ENCODE measurements at regions of chr16 and their contacts with region 1.

Region 1: GRCh38 chr16:11297492-11298142 is 16.5 kb upstream of the PRM1 start:
- DNase-seq: peak; percentile 95
- ATAC-seq: peak; percentile 97
- H3K4me3 ChIP-seq: peak overlapping the region in 4 of 5 experiments; percentile 0 to 41 (median 25)
- H3K4me3 Mint-ChIP-seq: peak overlapping the region; percentile 67
- H3K27ac ChIP-seq: peak overlapping the region; percentile 67 to 73
- H3K27ac Mint-ChIP-seq: peak overlapping the region; percentile 93
- H3K4me1 ChIP-seq: peaks cover 61 to 66% of the 10 kb centered on the region in 2 donors
- H3K4me1 Mint-ChIP-seq: peaks cover 71% of the 10 kb centered on the region
- H3K27me3 ChIP-seq: peaks cover 0 to 4% (median 0%) of the 10 kb centered on the region in 4 experiments
- H3K27me3 Mint-ChIP-seq: no peaks in the 10 kb centered on the region
- CTCF ChIP-seq: peak; percentile 35

Region 2: GRCh38 chr16:10957771-10958486 is 339.7 kb before region 1 on chr16:
- CTCF ChIA-PET with region 1: interaction called, 17 read pairs
- POLR2A ChIA-PET with region 1: no interaction called
- intact Hi-C with region 1: no loop called
- DNase-seq: peak; percentile 31
- ATAC-seq: peak; percentile 63
- H3K4me3 ChIP-seq: no peak overlapping the region
- H3K4me3 Mint-ChIP-seq: peak overlapping the region; percentile 53
- H3K27ac ChIP-seq: peak overlapping the region in 1 of 2 donors; percentile 22
- H3K27ac Mint-ChIP-seq: peak overlapping the region; percentile 62
- H3K4me1 ChIP-seq: peaks cover 21 to 30% of the 10 kb centered on the region in 2 donors
- H3K4me1 Mint-ChIP-seq: peaks cover 49% of the 10 kb centered on the region
- H3K27me3 ChIP-seq: no peaks in the 10 kb centered on the region
- H3K27me3 Mint-ChIP-seq: no peaks in the 10 kb centered on the region
- CTCF ChIP-seq: no peak

Region 3: DNA sequence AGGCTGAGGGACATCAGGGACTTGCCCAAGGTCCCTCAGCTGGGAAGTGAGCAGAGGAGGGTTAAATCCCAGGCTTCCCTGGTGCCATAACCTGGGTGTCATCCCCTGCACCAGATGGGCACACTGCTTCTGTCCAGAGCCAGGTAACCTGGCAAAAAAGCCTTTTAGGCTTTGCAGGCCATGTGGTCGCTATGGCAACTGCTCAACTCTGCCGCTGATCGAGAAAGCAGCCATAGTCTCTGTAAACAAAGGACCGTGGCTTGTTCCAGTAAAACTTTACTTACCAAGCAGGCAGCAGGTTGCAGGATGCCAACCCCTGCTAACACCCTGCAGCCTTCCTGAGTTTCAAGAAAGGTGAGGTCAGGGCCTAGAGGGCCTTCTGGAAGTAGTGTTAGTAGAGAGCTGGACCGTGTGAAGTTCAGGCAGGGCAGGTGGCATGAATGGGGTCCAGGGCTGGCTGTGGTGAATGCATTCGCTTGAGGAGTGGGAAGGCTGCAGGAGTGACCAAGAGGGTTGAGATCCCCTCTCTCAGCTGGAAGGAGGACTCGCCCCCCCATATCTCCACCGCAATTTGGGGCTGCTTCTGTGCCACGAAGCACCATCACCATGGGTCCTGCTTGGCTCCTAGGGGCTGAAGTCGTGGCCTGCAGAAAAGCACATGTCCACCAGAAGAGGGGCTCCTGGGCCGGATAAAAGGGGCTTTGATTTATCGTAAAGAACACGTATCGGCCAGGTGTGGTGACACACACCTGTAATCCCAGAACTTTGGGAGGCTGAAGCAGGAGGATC is 132.9 kb before region 1 on chr16:
- CTCF ChIA-PET with region 1: no interaction called
- POLR2A ChIA-PET with region 1: no interaction called
- intact Hi-C with region 1: no loop called
- DNase-seq: no peak
- ATAC-seq: no peak
- H3K4me3 ChIP-seq: no peak overlapping the region
- H3K4me3 Mint-ChIP-seq: no peak overlapping the region
- H3K27ac ChIP-seq: no peak overlapping the region
- H3K27ac Mint-ChIP-seq: no peak overlapping the region
- H3K4me1 ChIP-seq: no peaks in the 10 kb centered on the region
- H3K4me1 Mint-ChIP-seq: no peaks in the 10 kb centered on the region
- H3K27me3 ChIP-seq: no peaks in the 10 kb centered on the region
- H3K27me3 Mint-ChIP-seq: no peaks in the 10 kb centered on the region
- CTCF ChIP-seq: no peak

Region 4: GRCh38 chr16:11201498-11202259 is 95.9 kb before region 1 on chr16:
- CTCF ChIA-PET with region 1: no interaction called
- POLR2A ChIA-PET with region 1: no interaction called
- intact Hi-C with region 1: no loop called
- DNase-seq: no peak
- ATAC-seq: no peak
- H3K4me3 ChIP-seq: no peak overlapping the region
- H3K4me3 Mint-ChIP-seq: no peak overlapping the region
- H3K27ac ChIP-seq: no peak overlapping the region
- H3K27ac Mint-ChIP-seq: no peak overlapping the region
- H3K4me1 ChIP-seq: peaks cover 3 to 18% of the 10 kb centered on the region in 2 donors
- H3K4me1 Mint-ChIP-seq: peaks cover 37% of the 10 kb centered on the region
- H3K27me3 ChIP-seq: peaks cover 0 to 15% (median 6%) of the 10 kb centered on the region in 4 experiments
- H3K27me3 Mint-ChIP-seq: peaks cover 22% of the 10 kb centered on the region
- CTCF ChIP-seq: no peak

Region 5: GRCh38 chr16:11312718-11313492 is 15.3 kb after region 1 on chr16:
- CTCF ChIA-PET with region 1: interaction called, 136 read pairs
- POLR2A ChIA-PET with region 1: interaction called, 118 read pairs
- intact Hi-C with region 1: loop called (anchors 1 kb)
- DNase-seq: peak; percentile 37
- ATAC-seq: no peak
- H3K4me3 ChIP-seq: no peak overlapping the region
- H3K4me3 Mint-ChIP-seq: peak overlapping the region; percentile 48
- H3K27ac ChIP-seq: no peak overlapping the region
- H3K27ac Mint-ChIP-seq: peak overlapping the region; percentile 82
- H3K4me1 ChIP-seq: peaks cover 59 to 73% of the 10 kb centered on the region in 2 donors
- H3K4me1 Mint-ChIP-seq: peaks cover 71% of the 10 kb centered on the region
- H3K27me3 ChIP-seq: no peaks in the 10 kb centered on the region
- H3K27me3 Mint-ChIP-seq: no peaks in the 10 kb centered on the region
- CTCF ChIP-seq: no peak

Region 6: DNA sequence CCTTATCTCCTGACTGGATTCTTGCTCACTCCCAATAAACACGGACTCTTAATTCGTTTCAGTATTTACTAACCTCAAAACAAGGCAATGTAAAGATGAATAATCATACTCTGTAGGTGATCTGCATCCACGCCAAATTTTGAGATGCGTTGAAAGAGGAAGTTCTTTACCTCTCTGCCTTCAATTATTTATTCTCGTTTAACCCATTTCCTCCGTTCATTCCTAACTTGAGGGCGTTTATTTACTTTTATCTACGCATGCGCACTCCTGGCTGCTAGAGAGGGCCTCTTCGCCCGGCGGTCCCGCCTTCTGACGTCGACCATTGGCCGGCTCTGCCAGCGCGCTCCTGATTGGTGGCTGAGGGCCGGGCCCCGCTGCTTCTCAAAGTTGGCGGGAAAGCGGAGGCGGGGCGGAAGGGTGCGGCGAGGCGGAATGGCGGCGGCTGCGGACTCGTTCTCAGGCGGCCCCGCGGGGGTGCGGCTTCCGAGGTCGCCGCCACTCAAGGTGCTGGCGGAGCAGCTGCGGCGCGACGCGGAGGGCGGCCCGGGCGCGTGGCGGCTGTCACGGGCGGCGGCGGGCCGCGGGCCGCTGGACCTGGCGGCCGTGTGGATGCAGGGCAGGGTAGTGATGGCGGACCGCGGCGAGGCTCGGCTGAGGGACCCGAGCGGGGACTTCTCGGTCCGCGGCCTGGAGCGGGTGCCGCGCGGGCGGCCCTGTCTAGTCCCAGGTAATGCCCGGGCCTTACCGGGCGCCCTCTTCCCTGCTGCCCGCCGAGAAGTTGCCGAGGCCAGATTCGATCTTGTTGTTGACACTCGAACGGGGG is 47.6 kb after region 1 on chr16 and contains the start of gene RMI2:
- CTCF ChIA-PET with region 1: interaction called, 120 read pairs
- POLR2A ChIA-PET with region 1: interaction called, 11 read pairs
- intact Hi-C with region 1: loop called (anchors 1 kb)
- DNase-seq: peak; percentile 97
- ATAC-seq: peak; percentile 100
- H3K4me3 ChIP-seq: peak within 1 kb of the TSS; percentile 61 to 76 (median 70)
- H3K4me3 Mint-ChIP-seq: peak within 1 kb of the TSS; percentile 90
- H3K27ac ChIP-seq: peak within 1 kb of the TSS in 1 of 2 donors; percentile 26
- H3K27ac Mint-ChIP-seq: peak within 1 kb of the TSS; percentile 78
- H3K4me1 ChIP-seq: peaks cover 8 to 25% of the 10 kb centered on the region in 2 donors
- H3K4me1 Mint-ChIP-seq: peaks cover 39% of the 10 kb centered on the region
- H3K27me3 ChIP-seq: no peaks in the 10 kb centered on the region
- H3K27me3 Mint-ChIP-seq: no peaks in the 10 kb centered on the region
- CTCF ChIP-seq: no peak
- total RNA-seq, gene RMI2: 25.5 and 27.0 TPM in 2 replicates

Region 7: DNA sequence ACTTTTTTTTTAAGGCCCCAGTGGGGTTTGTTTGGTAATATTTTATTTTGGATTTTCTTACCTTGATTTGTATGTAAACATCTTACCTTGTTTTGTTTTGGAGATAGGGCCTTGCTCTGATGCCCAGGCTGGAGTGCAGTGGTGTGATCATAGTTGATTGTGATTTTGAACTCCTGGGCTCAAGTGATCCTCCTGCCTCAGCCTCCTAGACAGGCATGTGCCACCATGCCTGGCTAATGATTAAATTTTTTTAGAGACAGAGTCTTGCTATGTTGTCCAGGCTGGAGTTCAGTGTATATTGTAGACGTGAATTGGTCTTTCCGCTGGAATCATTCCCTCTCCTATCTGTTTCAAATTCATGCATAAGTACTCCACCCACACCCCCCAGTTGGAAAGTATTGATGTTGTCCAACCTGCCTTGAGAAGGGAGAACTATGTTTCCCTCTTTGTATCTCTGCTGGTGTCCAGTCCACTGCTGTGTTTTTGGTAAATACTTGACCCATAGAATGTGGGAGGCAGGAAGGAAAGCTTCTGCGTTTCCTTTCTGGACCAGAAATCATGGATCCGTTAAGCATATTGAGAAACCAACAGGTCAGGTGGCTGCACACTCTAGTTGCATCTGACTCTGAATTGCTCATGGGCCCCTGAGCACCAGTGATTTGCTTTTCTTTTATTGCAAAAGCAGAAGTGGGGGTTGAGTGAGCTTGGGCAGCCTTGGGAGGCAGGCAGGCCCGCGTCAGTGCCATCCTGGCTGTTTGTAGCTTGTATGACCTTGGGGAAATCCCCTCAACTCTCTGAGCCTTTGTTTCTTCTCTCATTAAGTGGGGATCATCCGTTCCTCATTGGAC is 72.7 kb after region 1 on chr16:
- CTCF ChIA-PET with region 1: interaction called, 16 read pairs
- POLR2A ChIA-PET with region 1: no interaction called
- intact Hi-C with region 1: loop called (anchors 1 kb)
- DNase-seq: peak; percentile 93
- ATAC-seq: peak; percentile 98
- H3K4me3 ChIP-seq: no peak overlapping the region
- H3K4me3 Mint-ChIP-seq: peak overlapping the region; percentile 62
- H3K27ac ChIP-seq: peak overlapping the region; percentile 44 to 56
- H3K27ac Mint-ChIP-seq: peak overlapping the region; percentile 71
- H3K4me1 ChIP-seq: peaks cover 23 to 26% of the 10 kb centered on the region in 2 donors
- H3K4me1 Mint-ChIP-seq: peaks cover 35% of the 10 kb centered on the region
- H3K27me3 ChIP-seq: no peaks in the 10 kb centered on the region
- H3K27me3 Mint-ChIP-seq: no peaks in the 10 kb centered on the region
- CTCF ChIP-seq: no peak

Region 8: GRCh38 chr16:11576427-11577289 is 279.0 kb after region 1 on chr16:
- CTCF ChIA-PET with region 1: no interaction called
- POLR2A ChIA-PET with region 1: no interaction called
- intact Hi-C with region 1: no loop called
- DNase-seq: peak; percentile 85
- ATAC-seq: peak; percentile 66
- H3K4me3 ChIP-seq: peak overlapping the region in 1 of 5 experiments; percentile 15
- H3K4me3 Mint-ChIP-seq: peak overlapping the region; percentile 86
- H3K27ac ChIP-seq: peak overlapping the region in 1 of 2 donors; percentile 65
- H3K27ac Mint-ChIP-seq: peak overlapping the region; percentile 89
- H3K4me1 ChIP-seq: peaks cover 65 to 82% of the 10 kb centered on the region in 2 donors
- H3K4me1 Mint-ChIP-seq: peaks cover 79% of the 10 kb centered on the region
- H3K27me3 ChIP-seq: no peaks in the 10 kb centered on the region
- H3K27me3 Mint-ChIP-seq: no peaks in the 10 kb centered on the region
- CTCF ChIP-seq: no peak